ENCODE measurements at regions of chr9 and their contacts with region 1.

Region 1: GRCh38 chr9:4762108-4762885 is 21.3 kb upstream of the AK3 start:
- DNase-seq: peak; percentile 94
- H3K4me3 Mint-ChIP-seq: peak overlapping the region; percentile 49
- H3K27ac Mint-ChIP-seq: peak overlapping the region; percentile 81
- H3K4me1 Mint-ChIP-seq: peaks cover 22% of the 10 kb centered on the region
- H3K27me3 Mint-ChIP-seq: peaks cover 7% of the 10 kb centered on the region

Region 2: DNA sequence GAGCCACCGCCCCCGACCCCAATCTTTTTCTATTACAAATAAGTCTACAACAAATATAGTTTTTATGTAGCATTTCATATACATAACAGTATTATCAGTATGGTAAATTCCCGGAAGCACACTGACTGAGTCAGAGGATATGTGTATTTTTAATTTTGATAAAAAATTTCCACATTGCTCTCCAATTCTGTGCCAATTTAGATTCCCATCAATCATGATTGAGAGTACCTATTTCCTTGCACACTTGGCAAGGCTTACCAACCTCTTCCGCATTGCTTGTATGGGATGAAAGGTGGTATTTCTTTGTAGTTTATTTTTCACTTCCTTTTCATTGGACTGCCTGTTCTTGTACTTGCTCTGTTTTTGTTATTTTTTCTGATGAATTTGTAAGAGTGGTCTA is 1441.1 kb before region 1 on chr9:
- CTCF ChIA-PET with region 1: no interaction called
- intact Hi-C with region 1: no loop called
- DNase-seq: no peak
- H3K4me3 Mint-ChIP-seq: no peak overlapping the region
- H3K27ac Mint-ChIP-seq: no peak overlapping the region
- H3K4me1 Mint-ChIP-seq: no peaks in the 10 kb centered on the region
- H3K27me3 Mint-ChIP-seq: no peaks in the 10 kb centered on the region

Region 3: DNA sequence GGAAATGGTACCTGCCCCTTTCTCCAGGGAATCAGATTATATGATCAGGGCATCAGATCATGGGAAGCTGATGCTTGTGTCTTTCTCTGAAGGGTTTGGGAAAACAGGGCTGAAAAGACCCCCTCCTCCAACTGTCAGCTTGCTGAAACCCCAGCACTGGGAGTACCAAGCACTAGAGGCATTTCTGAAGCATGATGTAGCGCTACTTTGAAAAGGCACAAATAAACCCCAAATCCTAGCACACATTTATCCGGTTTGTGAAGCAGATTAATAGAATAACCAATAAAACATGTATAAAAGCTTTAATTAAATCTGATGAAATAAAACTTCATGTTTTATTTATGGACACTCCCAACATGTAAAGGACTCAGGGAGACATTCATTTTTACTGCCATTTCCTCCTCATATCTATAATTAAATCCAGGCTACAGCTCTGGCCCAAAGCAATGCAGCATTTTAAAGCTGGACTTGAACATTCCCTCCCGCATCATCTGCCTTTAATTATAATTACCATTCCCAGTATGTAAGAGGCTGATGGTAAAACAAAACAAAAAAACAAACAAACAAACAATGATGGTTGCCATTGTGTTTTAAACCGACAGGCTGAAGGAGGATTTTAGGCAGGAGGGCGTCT is 938.3 kb before region 1 on chr9:
- CTCF ChIA-PET with region 1: no interaction called
- intact Hi-C with region 1: no loop called
- DNase-seq: no peak
- H3K4me3 Mint-ChIP-seq: no peak overlapping the region
- H3K27ac Mint-ChIP-seq: no peak overlapping the region
- H3K4me1 Mint-ChIP-seq: no peaks in the 10 kb centered on the region
- H3K27me3 Mint-ChIP-seq: peaks cover 8% of the 10 kb centered on the region

Region 4: DNA sequence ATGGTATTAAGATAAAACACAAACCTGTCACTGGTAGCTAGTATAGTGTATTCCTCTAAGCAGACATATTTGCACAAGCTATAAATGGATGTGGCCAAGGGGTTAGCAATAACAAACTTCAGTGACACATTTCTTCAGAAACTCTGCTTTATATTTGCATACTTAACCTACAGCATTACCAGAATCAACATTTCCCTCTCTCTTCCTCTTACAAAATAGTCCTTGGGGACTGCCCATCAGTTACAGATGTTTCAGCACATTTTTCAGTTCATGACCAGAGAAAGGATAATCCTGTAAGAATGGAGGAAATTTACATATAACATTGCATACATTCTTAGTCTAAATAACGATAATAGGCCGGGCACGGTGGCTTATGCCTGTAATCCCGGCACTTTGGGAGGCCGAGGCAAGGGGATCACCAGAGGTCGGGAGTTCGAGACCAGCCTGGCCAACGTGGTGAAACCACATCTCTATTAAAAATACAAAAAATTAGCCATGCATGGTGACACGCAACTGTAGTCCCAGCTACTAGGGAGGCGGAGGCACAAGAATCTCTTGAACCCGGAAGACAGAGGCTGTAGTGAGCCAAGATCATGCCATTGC is 297.3 kb before region 1 on chr9:
- CTCF ChIA-PET with region 1: no interaction called
- intact Hi-C with region 1: no loop called
- DNase-seq: no peak
- H3K4me3 Mint-ChIP-seq: no peak overlapping the region
- H3K27ac Mint-ChIP-seq: no peak overlapping the region
- H3K4me1 Mint-ChIP-seq: no peaks in the 10 kb centered on the region
- H3K27me3 Mint-ChIP-seq: no peaks in the 10 kb centered on the region

Region 5: DNA sequence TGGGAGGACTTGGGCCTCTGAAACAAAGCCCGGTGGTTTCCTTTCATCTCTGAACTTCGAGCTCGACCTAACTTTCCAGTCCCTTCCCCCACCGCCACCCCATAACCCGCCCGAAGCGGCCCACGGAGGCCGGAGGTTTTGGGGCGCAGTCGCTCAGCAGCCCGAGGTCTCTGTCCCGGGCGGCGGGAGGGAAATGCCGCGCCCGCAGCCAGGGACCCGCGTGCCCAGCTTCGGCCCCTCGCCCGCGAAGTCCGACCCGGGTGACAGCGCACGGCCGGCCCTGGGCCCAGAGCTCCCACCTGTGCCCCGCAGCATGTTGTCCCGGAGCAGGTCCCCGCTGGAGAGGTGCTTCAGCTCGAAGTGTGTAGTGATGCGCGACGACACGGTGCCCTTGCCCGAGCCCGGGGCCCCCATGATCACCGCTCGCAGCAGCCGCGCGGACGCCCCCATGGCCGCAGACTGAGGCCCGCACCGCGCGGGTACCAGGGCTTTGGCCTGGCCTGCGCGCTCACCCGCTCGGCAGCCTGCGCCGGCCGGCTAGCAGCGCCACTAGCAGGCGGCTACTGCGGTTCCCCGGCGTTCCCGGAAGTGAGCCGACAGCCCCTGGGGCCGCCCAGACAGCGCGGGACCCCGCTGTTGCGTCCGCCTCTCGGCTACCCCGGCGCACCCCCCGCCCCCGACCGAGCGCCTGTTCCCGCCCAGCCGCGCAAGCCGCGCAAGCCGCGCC is 21.5 kb before region 1 on chr9 and contains the start of gene AK3:
- CTCF ChIA-PET with region 1: interaction called, 48 read pairs
- intact Hi-C with region 1: no loop called
- DNase-seq: peak; percentile 90
- H3K4me3 Mint-ChIP-seq: peak within 1 kb of the TSS; percentile 91
- H3K27ac Mint-ChIP-seq: peak within 1 kb of the TSS; percentile 89
- H3K4me1 Mint-ChIP-seq: peaks cover 55% of the 10 kb centered on the region
- H3K27me3 Mint-ChIP-seq: no peaks in the 10 kb centered on the region
- total RNA-seq, gene AK3: 50.2 to 50.9 TPM

Region 6: DNA sequence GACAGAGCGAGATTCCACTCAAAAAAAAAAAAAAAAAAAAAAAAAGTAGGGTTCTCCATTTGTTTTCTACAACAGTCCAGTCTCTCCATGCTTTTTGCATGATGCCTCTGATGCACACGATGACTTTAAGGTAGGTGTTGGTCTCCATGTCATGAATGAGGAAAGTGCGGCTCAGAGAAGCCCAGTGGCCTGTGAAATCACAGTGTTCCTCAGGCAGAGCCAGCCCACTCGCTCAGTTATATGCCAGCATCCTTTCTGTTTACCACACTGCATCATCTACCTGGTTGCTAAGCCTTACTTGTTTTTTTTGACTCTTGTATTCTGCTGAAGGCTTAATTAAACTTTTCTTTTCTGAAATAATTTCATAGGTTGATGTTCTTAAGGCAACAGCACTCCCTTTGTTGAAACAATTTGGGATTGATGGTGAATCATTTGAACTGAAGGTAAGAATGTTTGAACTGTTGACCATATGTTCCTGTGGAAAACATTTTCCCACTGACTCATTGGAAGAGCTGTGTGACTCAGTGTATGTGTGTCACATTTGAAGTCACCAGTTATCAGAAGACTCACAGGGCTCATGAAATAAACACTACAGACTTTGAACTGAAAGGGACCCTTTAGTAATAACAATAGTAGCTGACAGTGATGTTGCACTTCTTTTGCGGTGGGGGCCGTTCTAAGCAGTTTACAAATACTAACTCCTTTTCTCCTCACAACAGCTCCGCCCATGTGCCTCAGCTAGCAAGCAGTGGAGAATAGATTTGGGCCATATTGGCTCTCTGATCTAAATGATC is 70.7 kb after region 1 on chr9:
- CTCF ChIA-PET with region 1: interaction called, 4 read pairs
- intact Hi-C with region 1: loop called (anchors 1 kb)
- DNase-seq: peak; percentile 80
- H3K4me3 Mint-ChIP-seq: no peak overlapping the region
- H3K27ac Mint-ChIP-seq: peak overlapping the region; percentile 85
- H3K4me1 Mint-ChIP-seq: peaks cover 46% of the 10 kb centered on the region
- H3K27me3 Mint-ChIP-seq: no peaks in the 10 kb centered on the region

Region 7: DNA sequence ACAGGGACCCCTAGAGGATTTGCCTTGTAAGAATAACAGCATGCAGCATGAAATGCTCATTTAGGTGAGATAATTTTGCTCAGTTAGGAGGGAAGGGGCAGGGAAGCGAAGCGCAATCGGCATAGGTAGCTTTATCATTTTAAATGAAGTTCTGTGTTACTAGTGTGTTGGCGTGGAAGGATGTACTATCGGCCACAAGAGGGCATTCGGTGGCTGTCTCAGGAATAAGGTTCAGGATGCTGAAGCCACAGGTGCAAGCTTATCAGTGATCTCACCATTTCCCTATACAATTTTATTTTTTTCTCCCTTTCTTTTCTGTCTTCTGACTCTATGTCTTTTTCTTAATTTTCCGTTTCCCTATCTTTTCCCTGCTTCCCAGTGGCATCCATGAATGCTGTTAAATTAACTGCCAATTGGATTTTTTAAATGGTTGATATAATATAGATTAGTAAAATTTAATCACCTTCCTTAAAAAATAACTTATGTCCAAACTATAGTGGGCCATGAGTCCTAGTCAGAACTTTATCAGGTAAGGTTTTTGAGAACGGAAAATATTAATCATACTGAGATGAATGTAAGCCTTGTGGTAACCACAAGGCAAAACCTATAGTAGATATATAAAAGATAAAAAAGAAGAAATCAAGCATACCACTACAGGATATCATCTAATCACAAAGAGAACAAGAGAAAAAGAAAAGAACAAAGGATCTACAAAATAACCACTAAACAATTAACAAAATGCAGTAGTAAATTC is 424.3 kb after region 1 on chr9:
- CTCF ChIA-PET with region 1: interaction called, 14 read pairs
- intact Hi-C with region 1: loop called (anchors 1 kb)
- DNase-seq: peak; percentile 79
- H3K4me3 Mint-ChIP-seq: no peak overlapping the region
- H3K27ac Mint-ChIP-seq: no peak overlapping the region
- H3K4me1 Mint-ChIP-seq: peaks cover 13% of the 10 kb centered on the region
- H3K27me3 Mint-ChIP-seq: no peaks in the 10 kb centered on the region

Region 8: DNA sequence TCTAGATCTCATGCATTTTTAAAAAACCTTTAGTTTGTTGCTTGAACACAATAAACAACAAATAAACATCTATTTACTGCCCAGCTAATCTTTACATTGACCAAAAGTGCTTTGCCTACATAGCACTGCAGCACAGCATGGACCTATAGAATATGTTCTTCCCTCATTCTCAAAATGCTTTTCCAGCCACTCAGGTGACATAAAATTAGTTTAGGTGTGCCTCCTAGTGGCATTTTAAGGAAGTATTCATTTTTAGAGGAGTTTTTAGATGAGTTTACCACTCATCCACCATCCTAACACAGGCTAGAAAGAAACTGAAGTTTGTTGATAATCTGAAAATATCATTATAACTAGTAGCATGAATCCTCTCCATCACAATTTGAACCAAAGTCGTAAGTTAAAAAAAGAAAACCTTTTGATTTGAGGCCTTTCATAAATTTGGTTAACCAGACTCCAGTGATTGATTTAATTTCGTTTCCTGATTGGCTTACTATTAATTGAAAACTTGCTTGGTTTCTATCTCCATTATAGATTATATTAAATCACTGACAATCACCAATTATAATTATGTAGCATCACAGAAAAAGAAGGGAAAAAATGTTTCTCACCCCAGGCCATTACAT is 662.8 kb after region 1 on chr9:
- CTCF ChIA-PET with region 1: interaction called, 4 read pairs
- intact Hi-C with region 1: loop called (anchors 1 kb)
- DNase-seq: no peak
- H3K4me3 Mint-ChIP-seq: no peak overlapping the region
- H3K27ac Mint-ChIP-seq: no peak overlapping the region
- H3K4me1 Mint-ChIP-seq: peaks cover 13% of the 10 kb centered on the region
- H3K27me3 Mint-ChIP-seq: no peaks in the 10 kb centered on the region

Measured in activated naive CD4-positive, alpha-beta T cell treated with anti-CD3 and anti-CD28 coated beads for 36 hours (primary cell).